Activated T-helper 1 cell treated with anti-CD3 and anti-CD28 coated beads, Interleukin-12 subunit alpha, Interleukin-12 subunit beta, Interleukin-2, Interleukin-4 antibody, amounts not matched to agents 30 ng/mL and 10 ng/mL and 1 ng/mL, durations not matched to agents 14 hours and 24 hours and 36 hours (primary cell): ENCODE measurements at regions of chr9 and their contacts with region 1.

Region 1: GRCh38 chr9:132249123-132249522 is 87.3 kb downstream of the NTNG2 start:
- DNase-seq: no peak
- H3K4me3 Mint-ChIP-seq: no peak overlapping the region
- H3K27ac Mint-ChIP-seq: no peak overlapping the region
- H3K4me1 Mint-ChIP-seq: no peaks in the 10 kb centered on the region
- H3K27me3 Mint-ChIP-seq: peaks cover 15% of the 10 kb centered on the region

Region 2: GRCh38 chr9:130847327-130848217 is 1401.6 kb before region 1 on chr9:
- intact Hi-C with region 1: no loop called
- DNase-seq: no peak
- H3K4me3 Mint-ChIP-seq: no peak overlapping the region
- H3K27ac Mint-ChIP-seq: no peak overlapping the region
- H3K4me1 Mint-ChIP-seq: peaks cover 11% of the 10 kb centered on the region
- H3K27me3 Mint-ChIP-seq: peaks cover 1% of the 10 kb centered on the region

Region 3: DNA sequence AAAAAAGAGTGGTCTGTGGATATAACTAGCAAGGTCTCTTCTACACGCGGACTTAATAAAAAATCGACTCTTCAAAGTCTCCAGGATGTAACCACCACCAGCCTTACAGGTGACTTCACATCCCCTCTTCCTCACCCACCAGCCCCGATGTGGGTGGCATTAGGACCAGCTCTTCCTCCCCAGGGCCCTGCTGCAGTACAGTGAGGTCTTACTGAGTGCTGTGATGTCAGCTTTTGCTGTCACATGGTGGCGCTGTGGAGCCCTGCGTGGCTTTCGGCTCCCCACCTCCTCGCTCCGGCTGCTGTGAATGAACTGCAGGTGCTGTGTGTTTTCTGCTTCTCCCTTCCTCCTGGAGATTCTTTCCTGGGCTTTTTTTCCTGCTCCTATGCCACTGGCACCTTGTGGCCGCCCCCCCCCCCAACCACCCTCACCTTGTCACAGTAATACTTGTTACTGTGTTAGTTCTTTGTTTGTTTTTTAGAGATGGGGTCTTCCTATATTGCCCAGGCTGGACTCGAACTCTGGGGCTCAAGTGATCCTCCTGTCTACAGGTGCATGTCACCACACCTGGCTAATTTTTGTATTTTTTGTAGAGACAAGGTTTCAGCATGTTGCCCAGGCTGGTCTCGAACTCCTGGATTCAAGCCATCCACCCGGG is 493.5 kb before region 1 on chr9:
- intact Hi-C with region 1: loop called (anchors 1 kb)
- DNase-seq: peak; percentile 76
- H3K4me3 Mint-ChIP-seq: no peak overlapping the region
- H3K27ac Mint-ChIP-seq: peak overlapping the region; percentile 29
- H3K4me1 Mint-ChIP-seq: peaks cover 21% of the 10 kb centered on the region
- H3K27me3 Mint-ChIP-seq: peaks cover 32% of the 10 kb centered on the region

Region 4: DNA sequence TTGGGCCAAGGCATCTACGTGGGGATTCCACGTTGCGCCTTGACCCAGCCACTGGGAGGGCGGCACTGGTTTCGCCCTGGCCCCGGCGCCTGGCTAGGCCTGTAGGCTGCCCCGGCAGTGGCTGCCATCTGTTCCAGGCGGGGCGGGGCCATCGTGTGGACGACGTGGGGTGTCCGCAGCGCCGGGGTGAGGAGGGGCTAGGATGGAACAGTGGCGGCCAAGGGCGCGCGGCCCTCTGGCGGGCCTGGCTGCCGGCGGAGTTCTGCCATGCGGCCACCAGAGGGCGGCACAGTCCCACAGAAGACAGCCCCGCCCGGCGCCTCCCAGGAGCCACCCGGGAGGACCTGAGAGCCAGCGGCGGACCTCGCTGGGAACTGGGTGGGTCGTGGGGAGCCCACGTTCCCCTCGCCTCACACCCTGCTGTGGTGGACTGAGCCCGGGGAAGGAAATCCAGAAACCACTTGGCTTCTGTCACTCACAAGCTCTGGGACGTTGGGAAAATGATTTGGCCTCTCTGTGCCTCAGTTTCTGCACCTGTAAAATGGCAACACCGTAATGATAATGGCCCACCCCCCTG is 486.7 kb before region 1 on chr9:
- intact Hi-C with region 1: loop called (anchors 1 kb)
- DNase-seq: peak; percentile 62
- H3K4me3 Mint-ChIP-seq: no peak overlapping the region
- H3K27ac Mint-ChIP-seq: no peak overlapping the region
- H3K4me1 Mint-ChIP-seq: peaks cover 12% of the 10 kb centered on the region
- H3K27me3 Mint-ChIP-seq: peaks cover 35% of the 10 kb centered on the region

Region 5: GRCh38 chr9:132341177-132341840 is 92.2 kb after region 1 on chr9:
- intact Hi-C with region 1: no loop called
- DNase-seq: no peak
- H3K4me3 Mint-ChIP-seq: no peak overlapping the region
- H3K27ac Mint-ChIP-seq: no peak overlapping the region
- H3K4me1 Mint-ChIP-seq: peaks cover 14% of the 10 kb centered on the region
- H3K27me3 Mint-ChIP-seq: no peaks in the 10 kb centered on the region